Gastrocnemius medialis (tissue), 4 donors: ENCODE measurements at regions of chr1 and their contacts with region 1.

Region 1: GRCh38 chr1:44631647-44632539 is 42.4 kb downstream of the TMEM53 start:
- DNase-seq: peak; percentile 78 to 81
- ATAC-seq: peak; percentile 87 to 90
- H3K4me3 ChIP-seq: peak overlapping the region; percentile 73 to 91 (median 86)
- H3K27ac ChIP-seq: peak overlapping the region; percentile 93 to 98 (median 95)
- H3K4me1 ChIP-seq: peaks cover 33 to 41% of the 10 kb centered on the region in 2 donors
- H3K27me3 ChIP-seq: no peaks in the 10 kb centered on the region
- CTCF ChIP-seq: peak in 3 of 5 experiments; percentile 3 to 50 (median 34)
- POLR2A ChIP-seq: peak; percentile 78 to 82

Region 2: DNA sequence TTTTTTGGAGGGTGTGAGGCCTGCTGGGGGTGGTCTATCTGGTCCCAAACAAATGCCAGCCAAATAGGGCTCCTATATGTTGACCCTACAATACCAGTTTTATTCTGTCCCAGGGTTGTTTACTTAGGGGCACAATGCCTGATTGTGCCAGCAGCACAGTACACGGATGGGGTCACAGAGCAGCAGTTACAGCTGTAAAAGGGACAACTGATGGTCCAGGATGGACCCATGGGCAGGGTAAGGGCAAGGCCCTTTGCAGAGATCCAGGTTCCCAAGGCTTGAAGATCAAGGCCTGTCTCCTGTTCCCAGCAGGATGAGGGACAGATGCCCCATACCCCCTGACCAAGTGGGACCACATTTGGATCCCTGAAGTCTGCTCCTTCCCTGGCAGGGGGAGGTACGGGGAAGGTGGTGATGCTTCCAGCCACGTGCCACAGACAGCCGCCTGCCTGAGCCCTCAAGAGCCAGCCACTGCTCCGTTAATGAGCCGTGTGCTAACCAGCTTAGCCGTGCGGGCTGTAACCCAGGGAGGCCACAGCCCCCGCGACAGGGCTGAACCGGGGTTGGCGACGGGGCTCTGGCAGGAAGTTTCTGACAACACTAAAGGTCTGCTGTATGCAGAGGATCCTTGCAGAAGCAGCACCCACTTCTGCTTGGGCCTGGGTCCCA is 618.8 kb before region 1 on chr1:
- in situ Hi-C with region 1: no loop called
- intact Hi-C with region 1: no loop called
- DNase-seq: no peak
- ATAC-seq: no peak
- H3K4me3 ChIP-seq: no peak overlapping the region
- H3K27ac ChIP-seq: no peak overlapping the region
- H3K4me1 ChIP-seq: no peaks in the 10 kb centered on the region
- H3K27me3 ChIP-seq: no peaks in the 10 kb centered on the region
- CTCF ChIP-seq: no peak
- POLR2A ChIP-seq: no peak

Region 3: GRCh38 chr1:44576456-44577150 is 55.3 kb before region 1 on chr1:
- in situ Hi-C with region 1: no loop called
- intact Hi-C with region 1: no loop called
- DNase-seq: no peak
- ATAC-seq: no peak
- H3K4me3 ChIP-seq: no peak overlapping the region
- H3K27ac ChIP-seq: no peak overlapping the region
- H3K4me1 ChIP-seq: no peaks in the 10 kb centered on the region
- H3K27me3 ChIP-seq: peaks cover 0 to 3% (median 0%) of the 10 kb centered on the region in 3 donors
- CTCF ChIP-seq: no peak
- POLR2A ChIP-seq: no peak

Region 4: GRCh38 chr1:44674113-44675000 is 42.5 kb after region 1 on chr1 and contains the starts of genes ARMH1 and TMEM53:
- in situ Hi-C with region 1: no loop called
- intact Hi-C with region 1: loop called (anchors 5 kb)
- DNase-seq: peak; percentile 99 to 100
- ATAC-seq: peak; percentile 93 to 95
- H3K4me3 ChIP-seq: peak within 1 kb of the TSS; percentile 62 to 88 (median 69)
- H3K27ac ChIP-seq: peak within 1 kb of the TSS; percentile 88 to 99 (median 95)
- H3K4me1 ChIP-seq: peaks cover 21 to 44% of the 10 kb centered on the region in 2 donors
- H3K27me3 ChIP-seq: no peaks in the 10 kb centered on the region
- CTCF ChIP-seq: no peak
- POLR2A ChIP-seq: peak; percentile 58 to 63
- total RNA-seq, gene ARMH1: 0.78 TPM in 1 of 4 donors, not detected in the others
- total RNA-seq, gene TMEM53: 2.6 to 5.9 (median 4.2) TPM